Activated CD4-positive, alpha-beta T cell treated with anti-CD3 and anti-CD28 coated beads for 36 hours (primary cell): ENCODE measurements at regions of chr18 and their contacts with region 1.

Region 1: DNA sequence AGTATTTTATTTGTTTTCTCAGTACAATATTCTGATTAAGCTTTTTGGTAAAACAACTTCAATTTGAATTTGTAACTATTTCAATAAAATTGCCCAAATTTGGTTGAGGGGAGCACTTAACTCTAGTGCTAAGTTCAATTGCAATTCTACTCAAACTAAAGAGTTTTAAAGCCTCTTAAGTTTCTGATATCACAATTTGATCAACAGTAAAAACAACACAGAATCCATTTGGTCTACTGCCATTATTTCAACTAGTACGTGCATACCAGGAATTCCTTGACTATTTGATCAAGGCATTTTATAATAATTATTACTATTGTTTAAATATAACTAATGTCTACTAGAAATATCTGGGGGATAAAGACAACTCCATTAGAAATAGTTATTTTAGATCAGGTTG is 150.9 kb downstream of the ROCK1 start:
- DNase-seq: no peak
- ATAC-seq: no peak
- H3K4me3 Mint-ChIP-seq: no peak overlapping the region
- H3K27ac Mint-ChIP-seq: no peak overlapping the region
- H3K4me1 Mint-ChIP-seq: peaks cover 2% of the 10 kb centered on the region
- H3K27me3 Mint-ChIP-seq: no peaks in the 10 kb centered on the region

Region 2: GRCh38 chr18:21053127-21053526 is 92.4 kb after region 1 on chr18:
- CTCF ChIA-PET with region 1: no interaction called
- POLR2A ChIA-PET with region 1: no interaction called
- intact Hi-C with region 1: loop called in 1 of 2 experiments (anchors 5 kb)
- DNase-seq: no peak
- ATAC-seq: no peak
- H3K4me3 Mint-ChIP-seq: no peak overlapping the region
- H3K27ac Mint-ChIP-seq: no peak overlapping the region
- H3K4me1 Mint-ChIP-seq: peaks cover 32% of the 10 kb centered on the region
- H3K27me3 Mint-ChIP-seq: no peaks in the 10 kb centered on the region